ENCODE measurements at regions of chr1 and their contacts with region 1.

Region 1: GRCh38 chr1:171485375-171486047 is at the start of gene PRRC2C:
- DNase-seq: peak; percentile 96
- H3K4me3 Mint-ChIP-seq: peak within 1 kb of the TSS; percentile 97
- H3K27ac Mint-ChIP-seq: peak within 1 kb of the TSS; percentile 91
- H3K4me1 Mint-ChIP-seq: peaks cover 47% of the 10 kb centered on the region
- H3K27me3 Mint-ChIP-seq: no peaks in the 10 kb centered on the region
- total RNA-seq, gene PRRC2C: 208 to 259 TPM

Region 2: GRCh38 chr1:171472183-171472647 is 13.3 kb before region 1 on chr1:
- CTCF ChIA-PET with region 1: interaction called, 10 read pairs
- POLR2A ChIA-PET with region 1: no interaction called
- DNase-seq: no peak
- H3K4me3 Mint-ChIP-seq: no peak overlapping the region
- H3K27ac Mint-ChIP-seq: no peak overlapping the region
- H3K4me1 Mint-ChIP-seq: no peaks in the 10 kb centered on the region
- H3K27me3 Mint-ChIP-seq: peaks cover 11% of the 10 kb centered on the region

Region 3: GRCh38 chr1:171500304-171500703 is 14.8 kb after region 1 on chr1:
- CTCF ChIA-PET with region 1: interaction called, 22 read pairs
- POLR2A ChIA-PET with region 1: interaction called, 4 read pairs
- DNase-seq: no peak
- H3K4me3 Mint-ChIP-seq: no peak overlapping the region
- H3K27ac Mint-ChIP-seq: no peak overlapping the region
- H3K4me1 Mint-ChIP-seq: peaks cover 64% of the 10 kb centered on the region
- H3K27me3 Mint-ChIP-seq: no peaks in the 10 kb centered on the region